ENCODE measurements at regions of chr7 and their contacts with region 1.

Region 1: GRCh38 chr7:21507626-21508343 is 35.1 kb upstream of the DNAH11 start:
- DNase-seq: peak; percentile 74
- ATAC-seq: peak; percentile 93
- H3K4me3 ChIP-seq: no peak overlapping the region
- H3K27ac ChIP-seq: no peak overlapping the region
- H3K4me1 ChIP-seq: peaks cover 5% of the 10 kb centered on the region; the same call in 1 of the 2 replicates
- H3K27me3 ChIP-seq: no peaks in the 10 kb centered on the region
- CTCF ChIP-seq: peak; percentile 86

Region 2: GRCh38 chr7:20778063-20778721 is 729.6 kb before region 1 on chr7:
- CTCF ChIA-PET with region 1: no interaction called
- POLR2A ChIA-PET with region 1: no interaction called
- intact Hi-C with region 1: loop called (anchors 10 kb)
- DNase-seq: peak; percentile 49
- ATAC-seq: peak; percentile 97
- H3K4me3 ChIP-seq: peak overlapping the region; percentile 58; the same call in 1 of the 2 replicates
- H3K27ac ChIP-seq: no peak overlapping the region
- H3K4me1 ChIP-seq: no peaks in the 10 kb centered on the region
- H3K27me3 ChIP-seq: peaks cover 88% of the 10 kb centered on the region
- CTCF ChIP-seq: peak; percentile 69

Region 3: GRCh38 chr7:21253740-21254687 is 253.8 kb before region 1 on chr7:
- CTCF ChIA-PET with region 1: interaction called, 14 read pairs
- POLR2A ChIA-PET with region 1: no interaction called
- intact Hi-C with region 1: loop called (anchors 1 kb)
- DNase-seq: peak; percentile 79
- ATAC-seq: peak; percentile 84
- H3K4me3 ChIP-seq: no peak overlapping the region
- H3K27ac ChIP-seq: no peak overlapping the region
- H3K4me1 ChIP-seq: no peaks in the 10 kb centered on the region
- H3K27me3 ChIP-seq: peaks cover 66% of the 10 kb centered on the region
- CTCF ChIP-seq: peak; percentile 79

Region 4: GRCh38 chr7:21261627-21262594 is 245.9 kb before region 1 on chr7:
- CTCF ChIA-PET with region 1: interaction called, 14 read pairs
- POLR2A ChIA-PET with region 1: no interaction called
- intact Hi-C with region 1: loop called (anchors 1 kb)
- DNase-seq: peak; percentile 51
- ATAC-seq: peak; percentile 56
- H3K4me3 ChIP-seq: no peak overlapping the region
- H3K27ac ChIP-seq: no peak overlapping the region
- H3K4me1 ChIP-seq: no peaks in the 10 kb centered on the region
- H3K27me3 ChIP-seq: peaks cover 16% of the 10 kb centered on the region
- CTCF ChIP-seq: peak; percentile 73

Region 5: GRCh38 chr7:21767300-21767900 is 259.6 kb after region 1 on chr7:
- CTCF ChIA-PET with region 1: no interaction called
- POLR2A ChIA-PET with region 1: no interaction called
- intact Hi-C with region 1: loop called (anchors 5 kb)
- DNase-seq: peak; percentile 83
- ATAC-seq: peak; percentile 99
- H3K4me3 ChIP-seq: no peak overlapping the region
- H3K27ac ChIP-seq: no peak overlapping the region
- H3K4me1 ChIP-seq: no peaks in the 10 kb centered on the region
- H3K27me3 ChIP-seq: peaks cover 24% of the 10 kb centered on the region
- CTCF ChIP-seq: peak; percentile 90

Region 6: DNA sequence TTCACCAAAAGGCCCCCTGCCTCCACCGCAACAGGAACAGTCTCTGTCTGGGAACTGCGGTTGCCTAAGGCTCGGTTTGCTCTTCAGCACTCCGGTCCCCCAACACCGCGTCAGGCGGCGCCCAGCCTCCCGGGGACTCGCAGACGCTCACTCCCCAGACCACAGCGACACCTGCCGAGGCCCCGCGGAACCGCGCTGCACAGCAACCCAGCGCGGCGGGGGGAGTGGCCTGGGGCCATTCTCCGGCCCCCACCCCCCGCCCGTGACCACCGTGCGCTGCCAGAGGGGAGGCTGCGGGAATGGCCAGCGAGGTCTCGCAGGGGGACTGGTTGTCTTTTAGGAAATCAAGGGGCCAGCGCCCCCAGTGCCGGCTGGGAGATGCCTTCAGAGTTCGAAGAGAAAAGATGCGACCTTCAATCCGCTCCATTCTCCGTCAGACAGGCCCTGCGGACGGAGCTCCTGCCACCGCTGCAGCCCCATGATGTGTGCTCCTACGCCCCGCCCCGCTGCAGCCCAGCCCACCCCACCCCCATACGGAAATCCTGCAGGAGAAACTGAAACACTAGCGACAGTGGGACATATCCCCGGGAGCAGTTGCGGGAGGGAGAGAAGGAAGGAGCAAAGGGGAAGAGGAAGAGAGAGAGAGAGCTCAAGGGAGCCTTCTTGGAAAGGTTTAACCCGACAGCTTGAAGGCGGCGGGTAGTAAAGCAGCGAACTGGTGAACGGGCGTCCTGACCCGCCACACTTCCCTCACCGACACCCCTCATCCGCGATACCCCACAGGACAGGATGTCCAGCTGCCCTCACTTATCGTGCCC is 575.3 kb after region 1 on chr7:
- CTCF ChIA-PET with region 1: no interaction called
- POLR2A ChIA-PET with region 1: no interaction called
- intact Hi-C with region 1: loop called (anchors 10 kb)
- DNase-seq: peak; percentile 79
- ATAC-seq: peak; percentile 95
- H3K4me3 ChIP-seq: peak overlapping the region; percentile 77
- H3K27ac ChIP-seq: no peak overlapping the region
- H3K4me1 ChIP-seq: peaks cover 11% of the 10 kb centered on the region; the same call in 1 of the 2 replicates
- H3K27me3 ChIP-seq: peaks cover 12% of the 10 kb centered on the region
- CTCF ChIP-seq: peak; percentile 89

Region 7: DNA sequence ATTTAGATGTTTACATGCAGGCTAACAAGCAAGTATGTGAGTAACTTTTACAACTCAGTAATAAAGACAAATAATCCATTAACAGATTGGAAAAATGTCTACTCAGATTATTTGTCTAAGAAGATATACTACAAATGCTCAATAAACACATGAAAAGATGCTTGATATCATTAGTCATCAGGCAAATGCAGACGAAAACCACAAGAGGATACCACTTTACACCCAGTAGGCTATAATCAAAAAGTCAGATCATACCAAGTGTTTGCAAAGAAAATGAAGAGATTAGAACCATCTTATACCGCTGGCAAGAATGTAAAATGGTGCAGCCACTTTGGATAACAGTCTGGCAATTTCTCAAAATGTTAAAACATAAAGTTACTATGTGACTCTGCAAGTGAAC is 1875.4 kb after region 1 on chr7:
- CTCF ChIA-PET with region 1: no interaction called
- POLR2A ChIA-PET with region 1: no interaction called
- intact Hi-C with region 1: no loop called
- DNase-seq: peak; percentile 55
- ATAC-seq: peak; percentile 85
- H3K4me3 ChIP-seq: no peak overlapping the region
- H3K27ac ChIP-seq: no peak overlapping the region
- H3K4me1 ChIP-seq: peaks cover 13% of the 10 kb centered on the region
- H3K27me3 ChIP-seq: no peaks in the 10 kb centered on the region
- CTCF ChIP-seq: no peak

Measured in PC-3 (cell line).